Endothelial cell of umbilical vein (primary cell): ENCODE measurements at regions of chr9 and their contacts with region 1.

Region 1: DNA sequence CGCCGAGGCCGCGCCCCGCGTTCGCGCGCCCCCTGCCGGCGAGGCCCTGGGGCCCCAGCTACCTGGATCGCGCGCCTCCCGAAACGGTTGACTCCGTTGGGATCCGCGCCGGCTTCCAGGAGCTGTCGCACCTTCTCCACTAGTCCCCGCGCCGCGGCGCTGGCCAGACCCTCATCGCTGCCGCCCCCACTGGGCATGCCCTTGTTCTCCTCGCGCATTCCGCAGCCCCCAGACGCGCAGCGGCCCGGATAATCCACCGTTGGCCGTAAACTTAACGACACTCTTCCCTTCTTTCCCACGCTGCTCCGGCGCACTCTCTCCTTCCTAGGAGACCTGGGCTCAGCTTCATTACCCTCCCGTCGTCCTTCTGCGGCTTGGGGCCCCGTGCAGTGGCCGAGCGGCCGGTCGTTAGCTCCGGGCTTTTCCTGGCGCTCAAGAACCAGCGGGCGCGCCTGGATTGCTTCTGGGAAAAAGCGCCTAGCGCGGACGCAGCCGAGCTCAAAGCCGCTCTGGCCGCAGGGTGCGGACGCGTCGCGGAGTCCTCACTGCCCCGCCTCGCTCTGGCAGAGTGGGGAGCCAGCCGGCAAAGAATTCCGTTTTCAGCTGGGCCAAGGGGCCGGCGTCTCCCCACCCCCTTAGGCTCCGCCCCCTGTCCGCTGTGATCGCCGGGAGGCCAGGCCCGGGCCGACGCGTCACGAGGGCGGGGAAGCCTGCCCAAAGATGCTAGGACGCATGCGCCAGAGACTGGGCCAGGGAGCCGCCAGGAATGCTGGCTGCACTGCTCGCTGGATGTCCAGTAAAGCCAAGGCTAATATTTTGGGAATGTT is at the start of gene CDKN2B:
- DNase-seq: peak; percentile 95
- H3K4me3 ChIP-seq: peak within 1 kb of the TSS; percentile 60 to 95 (median 90)
- H3K27ac ChIP-seq: peak within 1 kb of the TSS; percentile 70
- H3K4me1 ChIP-seq: peaks cover 16% of the 10 kb centered on the region
- H3K27me3 ChIP-seq: peaks cover 20 to 36% of the 10 kb centered on the region in 2 experiments
- CTCF ChIP-seq: peak; percentile 89 to 95
- POLR2A ChIP-seq: peak; percentile 95
- total RNA-seq, gene CDKN2B: 2.1 and 2.3 TPM in 2 replicates

Region 2: DNA sequence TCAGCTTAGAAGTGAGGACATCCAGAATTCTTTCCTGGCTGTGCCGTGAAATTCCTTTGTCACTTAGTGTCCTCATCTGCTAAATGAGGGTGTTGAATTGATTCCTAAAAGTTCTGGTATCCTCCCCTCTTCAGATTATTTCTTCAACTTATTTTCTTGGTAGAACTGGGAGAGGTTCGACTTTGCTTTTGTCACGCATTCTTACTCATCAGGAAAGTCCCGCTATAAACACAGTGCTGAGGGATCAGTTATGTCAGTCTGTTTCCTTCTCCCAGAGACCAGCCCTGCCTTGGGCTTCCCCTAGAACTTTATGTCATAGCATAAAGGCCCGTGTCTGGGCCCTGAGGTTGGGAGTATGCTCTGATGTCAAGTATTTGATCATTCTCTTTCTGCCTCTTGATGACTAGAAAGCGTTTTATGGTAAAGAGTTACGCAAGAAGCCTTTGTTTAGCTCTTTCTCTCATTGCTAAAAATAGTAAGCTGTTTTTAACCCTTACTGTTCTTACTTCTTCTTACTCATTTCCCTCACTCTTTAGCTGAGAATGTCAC is 176.9 kb before region 1 on chr9:
- CTCF ChIA-PET with region 1: interaction called, 18 read pairs
- POLR2A ChIA-PET with region 1: interaction called, 6 read pairs
- dilution Hi-C with region 1: no loop called
- intact Hi-C with region 1: no loop called
- DNase-seq: peak; percentile 80
- H3K4me3 ChIP-seq: no peak overlapping the region
- H3K27ac ChIP-seq: peak overlapping the region; percentile 84
- H3K4me1 ChIP-seq: peaks cover 32% of the 10 kb centered on the region
- H3K27me3 ChIP-seq: no peaks in the 10 kb centered on the region
- CTCF ChIP-seq: no peak
- POLR2A ChIP-seq: no peak

Region 3: DNA sequence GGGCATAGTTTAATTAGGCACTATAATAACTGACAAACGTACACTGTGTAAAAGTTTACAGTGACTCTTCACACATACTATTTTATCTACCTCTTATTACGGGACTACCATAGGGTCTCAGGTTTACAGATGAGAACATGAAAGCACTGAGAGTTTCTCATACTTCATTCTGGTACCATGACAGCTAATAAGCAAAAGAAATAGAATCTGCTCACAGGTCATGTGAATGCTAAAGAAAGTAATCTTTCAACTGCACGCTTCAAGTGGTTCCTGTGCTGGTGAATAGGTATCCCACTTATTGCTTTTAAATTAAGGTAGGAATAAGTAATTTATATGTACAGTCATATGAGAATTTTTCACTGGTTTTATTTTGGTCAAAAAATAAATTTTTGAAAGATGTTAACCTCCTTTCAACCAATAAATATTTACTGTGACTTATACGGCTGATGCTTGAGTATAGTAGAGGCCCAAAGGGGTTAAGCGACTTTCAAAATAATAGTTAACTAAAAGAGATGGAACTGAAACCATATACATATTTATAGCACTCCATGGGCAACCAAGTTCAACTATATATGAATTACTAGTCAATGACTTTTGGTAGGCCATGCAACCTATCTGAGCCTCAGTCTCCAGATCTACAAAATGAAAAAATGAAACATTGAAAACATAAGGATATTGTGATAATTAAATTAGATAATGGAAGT is 22.8 kb before region 1 on chr9:
- CTCF ChIA-PET with region 1: interaction called, 39 read pairs
- POLR2A ChIA-PET with region 1: no interaction called
- dilution Hi-C with region 1: no loop called
- intact Hi-C with region 1: loop called (anchors 2 kb)
- DNase-seq: no peak
- H3K4me3 ChIP-seq: no peak overlapping the region
- H3K27ac ChIP-seq: no peak overlapping the region
- H3K4me1 ChIP-seq: peaks cover 18% of the 10 kb centered on the region
- H3K27me3 ChIP-seq: peaks cover 29 to 92% of the 10 kb centered on the region in 2 experiments
- CTCF ChIP-seq: no peak
- POLR2A ChIP-seq: no peak

Region 4: GRCh38 chr9:22037954-22038690 is 29.2 kb after region 1 on chr9:
- CTCF ChIA-PET with region 1: interaction called, 53 read pairs
- POLR2A ChIA-PET with region 1: no interaction called
- dilution Hi-C with region 1: no loop called
- intact Hi-C with region 1: loop called (anchors 1 kb)
- DNase-seq: peak; percentile 51
- H3K4me3 ChIP-seq: no peak overlapping the region
- H3K27ac ChIP-seq: no peak overlapping the region
- H3K4me1 ChIP-seq: no peaks in the 10 kb centered on the region
- H3K27me3 ChIP-seq: no peaks in the 10 kb centered on the region
- CTCF ChIP-seq: peak; percentile 22 to 38
- POLR2A ChIP-seq: no peak

Region 5: GRCh38 chr9:22141906-22142305 is 133.0 kb after region 1 on chr9:
- CTCF ChIA-PET with region 1: interaction called, 12 read pairs
- POLR2A ChIA-PET with region 1: no interaction called
- dilution Hi-C with region 1: no loop called
- intact Hi-C with region 1: no loop called
- DNase-seq: peak; percentile 69
- H3K4me3 ChIP-seq: no peak overlapping the region
- H3K27ac ChIP-seq: no peak overlapping the region
- H3K4me1 ChIP-seq: peaks cover 30% of the 10 kb centered on the region
- H3K27me3 ChIP-seq: no peaks in the 10 kb centered on the region
- CTCF ChIP-seq: no peak
- POLR2A ChIP-seq: no peak

Region 6: GRCh38 chr9:22446950-22447617 is 438.1 kb after region 1 on chr9:
- CTCF ChIA-PET with region 1: interaction called, 10 read pairs
- POLR2A ChIA-PET with region 1: no interaction called
- dilution Hi-C with region 1: no loop called
- intact Hi-C with region 1: loop called (anchors 5 kb)
- DNase-seq: peak; percentile 72
- H3K4me3 ChIP-seq: peak overlapping the region; percentile 49 to 86 (median 86)
- H3K27ac ChIP-seq: peak overlapping the region; percentile 66
- H3K4me1 ChIP-seq: peaks cover 19% of the 10 kb centered on the region
- H3K27me3 ChIP-seq: peaks cover 5 to 22% of the 10 kb centered on the region in 2 experiments
- CTCF ChIP-seq: peak; percentile 27 to 42
- POLR2A ChIP-seq: no peak